ENCODE measurements at regions of chr9 and their contacts with region 1.

Region 1: GRCh38 chr9:18143028-18143745 is 330.8 kb upstream of the ADAMTSL1 start:
- DNase-seq: no peak
- ATAC-seq: no peak
- H3K4me3 ChIP-seq: no peak overlapping the region
- H3K27ac ChIP-seq: no peak overlapping the region
- H3K4me1 ChIP-seq: no peaks in the 10 kb centered on the region
- H3K27me3 ChIP-seq: no peaks in the 10 kb centered on the region
- CTCF ChIP-seq: peak in 7 of 12 donors; percentile 11 to 33 (median 27)
- POLR2A ChIP-seq: no peak

Region 2: DNA sequence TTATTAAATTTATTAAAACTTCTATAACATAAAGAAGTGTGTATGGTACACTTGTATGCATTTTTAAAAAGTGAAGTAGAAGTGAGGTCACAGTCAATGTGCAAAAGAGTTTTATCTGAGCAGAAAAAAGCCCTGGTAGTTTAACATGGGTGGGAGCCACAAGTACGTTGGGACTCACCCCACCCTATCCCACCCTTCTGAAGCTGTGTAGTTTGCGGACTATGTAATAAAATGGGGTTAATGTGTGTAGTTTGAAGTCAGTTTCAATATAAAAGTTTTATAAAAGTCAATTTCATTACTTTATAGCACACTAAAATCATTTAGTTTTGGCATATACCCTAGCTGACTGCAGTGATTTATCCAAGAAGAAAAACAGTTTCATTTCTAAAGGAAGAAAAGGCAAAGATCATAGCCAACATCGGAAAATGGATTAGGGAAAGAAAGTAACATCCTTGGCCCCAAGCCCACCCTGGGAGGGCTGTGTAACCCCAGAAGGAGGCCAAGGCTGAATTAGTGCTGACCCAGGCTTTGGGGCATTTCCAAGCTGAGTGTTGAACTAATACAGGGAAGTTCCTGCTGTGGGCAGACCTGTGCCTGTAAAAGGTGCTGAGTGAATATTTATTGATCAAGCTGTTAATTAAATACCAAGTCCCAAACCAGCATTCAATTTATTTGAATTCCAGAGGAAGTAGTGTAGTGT is 67.8 kb before region 1 on chr9:
- intact Hi-C with region 1: loop called in 1 of 10 experiments (anchors 10 kb)
- DNase-seq: no peak
- ATAC-seq: no peak
- H3K4me3 ChIP-seq: no peak overlapping the region
- H3K27ac ChIP-seq: no peak overlapping the region
- H3K4me1 ChIP-seq: peaks cover 0 to 6% (median 0%) of the 10 kb centered on the region in 12 donors
- H3K27me3 ChIP-seq: peaks cover 0 to 3% (median 0%) of the 10 kb centered on the region in 9 donors
- CTCF ChIP-seq: no peak
- POLR2A ChIP-seq: no peak